ENCODE measurements at regions of chr9 and their contacts with region 1.

Region 1: GRCh38 chr9:34603610-34604231 is 8.2 kb downstream of the RPP25L start:
- DNase-seq: peak; percentile 63
- ATAC-seq: peak; percentile 97
- H3K4me3 ChIP-seq: no peak overlapping the region
- H3K27ac ChIP-seq: no peak overlapping the region
- H3K4me1 ChIP-seq: no peaks in the 10 kb centered on the region
- H3K27me3 ChIP-seq: peaks cover 55% of the 10 kb centered on the region
- CTCF ChIP-seq: peak; percentile 90
- POLR2A ChIP-seq: no peak
- RAD21 ChIP-seq: peak; percentile 94

Region 2: DNA sequence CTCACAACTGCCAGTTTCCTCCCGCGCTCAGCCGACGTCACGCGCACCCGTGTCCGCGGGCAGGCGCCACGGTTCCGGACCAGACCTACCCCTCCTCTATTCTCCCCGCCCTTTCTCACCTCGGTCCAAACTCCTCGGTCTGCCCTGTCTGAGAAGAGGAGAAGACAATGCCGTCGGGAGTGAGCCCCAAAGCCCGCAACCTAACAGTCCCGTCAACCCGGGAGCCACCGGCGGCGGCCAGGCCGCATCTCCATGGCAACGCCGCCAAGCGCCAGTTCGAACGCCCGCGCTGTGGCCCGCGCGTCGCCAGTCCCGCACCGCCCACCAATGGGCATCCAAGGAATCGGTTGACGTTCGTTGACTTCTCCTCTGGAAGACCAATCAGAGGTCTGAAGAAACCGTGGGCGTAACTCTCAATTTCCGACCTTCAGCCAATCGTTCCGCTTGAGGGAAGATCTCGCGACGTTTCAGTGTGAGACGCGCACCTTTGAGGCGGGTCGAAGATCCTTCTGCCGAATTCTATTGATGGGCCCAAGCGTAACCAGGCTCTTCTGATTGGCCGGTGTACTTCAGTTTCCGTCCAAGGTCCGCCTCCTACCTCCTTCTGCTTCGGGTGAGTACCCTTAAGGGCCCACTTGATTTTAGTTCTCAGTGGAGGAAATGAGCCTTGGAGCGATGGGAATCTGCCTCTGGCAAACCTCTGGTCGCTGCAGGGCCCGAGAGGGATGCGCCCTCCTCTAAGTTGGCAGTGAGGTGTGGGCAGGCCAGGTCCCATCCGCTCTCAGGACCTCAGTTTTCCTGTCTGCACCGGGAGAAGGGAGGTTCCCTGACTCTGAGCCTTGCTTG is 274.5 kb before region 1 on chr9 and contains the starts of genes KIF24 and NUDT2:
- CTCF ChIA-PET with region 1: no interaction called
- POLR2A ChIA-PET with region 1: no interaction called
- dilution Hi-C with region 1: no loop called
- in situ Hi-C with region 1: no loop called
- intact Hi-C with region 1: loop called (anchors 1 kb)
- DNase-seq: peak; percentile 100
- ATAC-seq: peak; percentile 95
- H3K4me3 ChIP-seq: peak within 1 kb of the TSS; percentile 80
- H3K27ac ChIP-seq: peak within 1 kb of the TSS; percentile 93
- H3K4me1 ChIP-seq: peaks cover 8% of the 10 kb centered on the region
- H3K27me3 ChIP-seq: no peaks in the 10 kb centered on the region
- CTCF ChIP-seq: 0 out of 2 replicates have a peak, but pooled peaks have one; percentile 6
- POLR2A ChIP-seq: peak; percentile 94
- RAD21 ChIP-seq: no peak
- total RNA-seq, gene KIF24: 2.5 and 3.0 TPM in 2 replicates
- total RNA-seq, gene NUDT2: 33.9 and 45.0 TPM in 2 replicates

Region 3: GRCh38 chr9:34403554-34404380 is 200.0 kb before region 1 on chr9:
- CTCF ChIA-PET with region 1: interaction called, 3 read pairs
- POLR2A ChIA-PET with region 1: no interaction called
- dilution Hi-C with region 1: no loop called
- in situ Hi-C with region 1: loop called (anchors 5 kb)
- intact Hi-C with region 1: loop called (anchors 2 kb)
- DNase-seq: peak; percentile 68
- ATAC-seq: peak; percentile 90
- H3K4me3 ChIP-seq: no peak overlapping the region
- H3K27ac ChIP-seq: no peak overlapping the region
- H3K4me1 ChIP-seq: no peaks in the 10 kb centered on the region; the same call in 1 of the 2 replicates
- H3K27me3 ChIP-seq: no peaks in the 10 kb centered on the region
- CTCF ChIP-seq: peak; percentile 97
- POLR2A ChIP-seq: no peak
- RAD21 ChIP-seq: peak; percentile 84

Region 4: DNA sequence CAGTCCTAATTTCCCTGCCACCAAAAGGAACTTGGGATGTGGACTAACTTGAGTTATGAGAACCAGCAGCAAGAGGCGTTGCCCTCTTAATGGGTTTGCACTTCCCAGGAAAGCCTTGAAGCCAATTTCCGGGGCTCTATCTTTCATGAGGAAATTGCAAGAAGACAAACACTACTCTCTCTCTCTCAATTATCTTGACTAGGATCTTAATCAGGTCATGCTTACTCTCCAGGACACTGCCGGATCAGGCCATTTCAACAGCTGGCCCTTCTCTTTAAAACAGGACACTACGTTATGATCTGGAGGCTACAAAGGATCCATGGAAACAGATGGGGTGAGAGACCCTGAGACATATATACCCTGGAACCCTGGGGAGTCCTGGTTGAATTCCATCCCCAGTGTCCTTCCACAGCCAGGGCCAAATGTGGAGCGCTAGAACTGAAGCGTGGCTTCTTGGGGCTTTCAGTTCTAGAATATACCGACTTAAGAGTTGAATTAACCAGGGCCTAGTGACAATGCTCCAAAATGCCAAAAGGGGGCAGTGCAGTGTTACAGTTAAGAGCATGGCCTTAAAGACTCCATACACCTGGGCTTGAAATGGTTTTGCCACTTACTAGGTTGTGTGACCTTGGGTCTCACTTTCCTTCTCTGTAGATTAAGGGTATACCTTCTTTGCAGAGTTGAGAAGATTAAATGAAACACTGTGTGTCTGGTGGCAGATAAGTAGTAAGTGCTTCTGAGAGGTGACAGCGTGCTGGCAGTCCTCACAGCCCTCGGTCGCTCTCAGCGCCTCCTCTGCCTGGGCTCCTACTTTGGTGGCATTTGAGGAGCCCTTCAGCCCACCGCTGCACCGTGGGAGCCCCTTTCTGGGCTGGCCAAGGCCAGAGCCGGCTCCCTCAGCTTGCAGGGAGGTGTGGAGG is 166.5 kb before region 1 on chr9:
- CTCF ChIA-PET with region 1: no interaction called
- POLR2A ChIA-PET with region 1: no interaction called
- dilution Hi-C with region 1: no loop called
- in situ Hi-C with region 1: loop called (anchors 10 kb)
- intact Hi-C with region 1: no loop called
- DNase-seq: peak; percentile 79
- ATAC-seq: peak; percentile 92
- H3K4me3 ChIP-seq: no peak overlapping the region
- H3K27ac ChIP-seq: no peak overlapping the region
- H3K4me1 ChIP-seq: peaks cover 7% of the 10 kb centered on the region
- H3K27me3 ChIP-seq: no peaks in the 10 kb centered on the region
- CTCF ChIP-seq: peak; percentile 84
- POLR2A ChIP-seq: 0 out of 2 replicates have a peak, but pooled peaks have one; percentile 33
- RAD21 ChIP-seq: peak; percentile 88

Region 5: DNA sequence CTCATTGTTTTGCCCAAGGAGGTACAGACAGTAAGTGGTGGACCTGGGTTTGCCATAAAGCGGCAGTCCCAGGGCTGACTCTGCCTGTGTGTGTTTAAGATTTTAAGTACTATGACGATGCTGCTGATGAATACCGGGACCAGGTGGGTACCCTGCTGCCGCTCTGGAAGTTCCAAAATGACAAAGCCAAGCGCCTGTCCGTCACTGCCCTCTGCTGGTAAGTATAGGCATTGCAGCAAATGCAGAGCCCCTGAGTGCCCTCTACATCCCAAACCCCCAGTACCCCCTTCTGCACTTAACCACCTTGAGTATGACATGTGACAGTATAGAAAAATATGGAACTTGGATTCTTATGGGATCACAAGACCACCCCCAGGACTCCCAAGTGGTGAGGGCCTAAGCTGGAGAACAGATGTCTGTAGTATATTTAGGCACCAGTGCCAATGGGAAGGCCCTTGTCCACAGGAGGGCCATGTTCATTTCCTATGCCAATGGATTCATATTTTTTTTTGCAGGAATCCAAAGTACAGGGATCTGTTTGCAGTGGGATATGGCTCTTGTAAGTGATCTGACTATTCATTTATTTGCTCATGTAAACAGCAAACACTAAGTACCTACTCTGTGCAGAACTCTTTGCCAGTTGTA is 103.0 kb before region 1 on chr9:
- CTCF ChIA-PET with region 1: no interaction called
- POLR2A ChIA-PET with region 1: no interaction called
- dilution Hi-C with region 1: no loop called
- in situ Hi-C with region 1: no loop called
- intact Hi-C with region 1: loop called (anchors 1 kb)
- DNase-seq: peak; percentile 19
- ATAC-seq: peak; percentile 80
- H3K4me3 ChIP-seq: no peak overlapping the region
- H3K27ac ChIP-seq: no peak overlapping the region
- H3K4me1 ChIP-seq: no peaks in the 10 kb centered on the region; the same call in 1 of the 2 replicates
- H3K27me3 ChIP-seq: peaks cover 53% of the 10 kb centered on the region
- CTCF ChIP-seq: peak; percentile 89
- POLR2A ChIP-seq: no peak
- RAD21 ChIP-seq: peak; percentile 84

Region 6: DNA sequence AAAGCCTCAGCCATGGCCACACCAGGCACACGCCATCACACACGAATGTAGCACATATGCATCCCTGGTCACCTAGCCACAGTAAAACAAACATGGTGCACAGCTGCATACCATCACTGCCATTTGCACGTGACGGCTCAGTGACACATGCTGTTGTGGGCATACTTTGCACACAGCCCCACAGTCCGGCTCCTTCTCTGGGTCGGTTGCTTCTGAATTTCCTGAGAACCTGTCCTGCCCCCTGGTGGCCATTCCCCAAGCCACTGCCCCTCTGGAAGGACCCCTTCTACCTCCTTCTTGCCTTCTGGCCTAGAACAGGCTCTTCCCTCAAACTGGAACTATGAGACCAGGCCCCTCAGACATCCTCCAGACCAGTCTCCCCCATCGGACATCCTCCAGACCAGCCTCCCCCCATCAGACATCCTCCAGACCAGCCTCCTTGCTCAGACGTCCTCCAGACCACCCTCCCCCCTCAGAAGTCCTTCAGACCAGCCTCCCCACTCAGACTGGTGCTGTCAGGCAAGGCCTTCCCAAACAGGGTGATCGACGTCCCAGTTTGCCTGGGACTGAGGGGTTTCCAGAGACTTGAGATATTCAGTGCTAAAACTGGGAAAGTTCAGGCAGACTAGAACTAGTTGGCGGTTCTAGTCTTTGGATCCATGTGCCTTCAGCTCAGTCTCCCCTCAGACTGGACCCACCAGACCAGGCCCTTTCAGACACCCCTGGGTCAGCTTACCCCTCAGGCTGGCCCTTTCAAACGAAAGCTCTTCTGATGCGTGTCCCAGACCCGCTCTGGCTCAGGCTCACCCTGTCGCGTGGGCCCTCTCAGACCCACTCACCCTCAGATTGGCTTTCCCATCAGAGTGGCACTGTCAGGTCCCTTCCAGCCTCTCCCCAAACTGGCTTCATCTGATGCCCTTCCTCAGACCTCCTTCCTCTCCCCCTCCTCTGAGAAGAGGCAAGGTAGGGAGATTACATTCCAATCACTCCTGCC is 56.6 kb before region 1 on chr9:
- CTCF ChIA-PET with region 1: interaction called, 9 read pairs
- POLR2A ChIA-PET with region 1: no interaction called
- dilution Hi-C with region 1: no loop called
- in situ Hi-C with region 1: loop called (anchors 5 kb)
- intact Hi-C with region 1: loop called (anchors 1 kb)
- DNase-seq: peak; percentile 70
- ATAC-seq: peak; percentile 76
- H3K4me3 ChIP-seq: no peak overlapping the region
- H3K27ac ChIP-seq: no peak overlapping the region
- H3K4me1 ChIP-seq: no peaks in the 10 kb centered on the region
- H3K27me3 ChIP-seq: peaks cover 25% of the 10 kb centered on the region; the same call in 1 of the 2 replicates
- CTCF ChIP-seq: peak; percentile 60
- POLR2A ChIP-seq: no peak
- RAD21 ChIP-seq: peak; percentile 64

Region 7: GRCh38 chr9:34554211-34555001 is 49.3 kb before region 1 on chr9:
- CTCF ChIA-PET with region 1: interaction called, 3 read pairs
- POLR2A ChIA-PET with region 1: no interaction called
- dilution Hi-C with region 1: no loop called
- in situ Hi-C with region 1: loop called (anchors 5 kb)
- intact Hi-C with region 1: no loop called
- DNase-seq: no peak
- ATAC-seq: no peak
- H3K4me3 ChIP-seq: no peak overlapping the region
- H3K27ac ChIP-seq: no peak overlapping the region
- H3K4me1 ChIP-seq: peaks cover under 1% of the 10 kb centered on the region; the same call in 1 of the 2 replicates
- H3K27me3 ChIP-seq: peaks cover 63% of the 10 kb centered on the region
- CTCF ChIP-seq: no peak
- POLR2A ChIP-seq: no peak
- RAD21 ChIP-seq: no peak